PC-9 (cell line): ENCODE measurements at regions of chr11 and their contacts with region 1.

Region 1: GRCh38 chr11:87097582-87097981 is 59.8 kb downstream of the TMEM135 start:
- DNase-seq: peak in 1 of 2 experiments; percentile 10
- H3K4me3 ChIP-seq: no peak overlapping the region
- H3K27ac ChIP-seq: no peak overlapping the region
- H3K4me1 ChIP-seq: no peaks in the 10 kb centered on the region
- H3K27me3 ChIP-seq: no peaks in the 10 kb centered on the region
- CTCF ChIP-seq: peak; percentile 73

Region 2: GRCh38 chr11:86978756-86979608 is 118.6 kb before region 1 on chr11:
- CTCF ChIA-PET with region 1: no interaction called
- POLR2A ChIA-PET with region 1: no interaction called
- intact Hi-C with region 1: loop called (anchors 5 kb)
- DNase-seq: no peak
- H3K4me3 ChIP-seq: no peak overlapping the region
- H3K27ac ChIP-seq: no peak overlapping the region
- H3K4me1 ChIP-seq: peaks cover 19% of the 10 kb centered on the region
- H3K27me3 ChIP-seq: no peaks in the 10 kb centered on the region
- CTCF ChIP-seq: peak; percentile 83

Region 3: GRCh38 chr11:87173185-87174039 is 75.8 kb after region 1 on chr11:
- CTCF ChIA-PET with region 1: no interaction called
- POLR2A ChIA-PET with region 1: no interaction called
- intact Hi-C with region 1: no loop called
- DNase-seq: peak in 1 of 2 experiments; percentile 83
- H3K4me3 ChIP-seq: 0 out of 2 replicates have a peak overlapping the region, but pooled peaks have one; percentile 19
- H3K27ac ChIP-seq: peak overlapping the region; percentile 74
- H3K4me1 ChIP-seq: peaks cover 40% of the 10 kb centered on the region
- H3K27me3 ChIP-seq: no peaks in the 10 kb centered on the region
- CTCF ChIP-seq: no peak